ENCODE measurements at regions of chr20 and their contacts with region 1.

Region 1: GRCh38 chr20:956330-956951 is 40.3 kb upstream of the ANGPT4 start:
- DNase-seq: peak; percentile 72
- H3K4me3 Mint-ChIP-seq: no peak overlapping the region
- H3K27ac Mint-ChIP-seq: no peak overlapping the region
- H3K4me1 Mint-ChIP-seq: no peaks in the 10 kb centered on the region
- H3K27me3 Mint-ChIP-seq: peaks cover 67% of the 10 kb centered on the region
- CTCF ChIP-seq: peak; percentile 100

Region 2: GRCh38 chr20:815914-816606 is 140.4 kb before region 1 on chr20:
- CTCF ChIA-PET with region 1: interaction called, 464 read pairs
- POLR2A ChIA-PET with region 1: interaction called, 11 read pairs
- intact Hi-C with region 1: loop called (anchors 1 kb)
- DNase-seq: peak; percentile 72
- H3K4me3 Mint-ChIP-seq: no peak overlapping the region
- H3K27ac Mint-ChIP-seq: no peak overlapping the region
- H3K4me1 Mint-ChIP-seq: no peaks in the 10 kb centered on the region
- H3K27me3 Mint-ChIP-seq: peaks cover 31% of the 10 kb centered on the region
- CTCF ChIP-seq: peak; percentile 97

Region 3: GRCh38 chr20:839015-839414 is 117.4 kb before region 1 on chr20:
- CTCF ChIA-PET with region 1: interaction called, 99 read pairs
- POLR2A ChIA-PET with region 1: interaction called, 3 read pairs
- intact Hi-C with region 1: no loop called
- DNase-seq: no peak
- H3K4me3 Mint-ChIP-seq: no peak overlapping the region
- H3K27ac Mint-ChIP-seq: no peak overlapping the region
- H3K4me1 Mint-ChIP-seq: peaks cover 29% of the 10 kb centered on the region
- H3K27me3 Mint-ChIP-seq: no peaks in the 10 kb centered on the region
- CTCF ChIP-seq: no peak

Region 4: GRCh38 chr20:905396-905961 is 51.0 kb before region 1 on chr20:
- CTCF ChIA-PET with region 1: interaction called, 14 read pairs
- POLR2A ChIA-PET with region 1: no interaction called
- intact Hi-C with region 1: no loop called
- DNase-seq: no peak
- H3K4me3 Mint-ChIP-seq: no peak overlapping the region
- H3K27ac Mint-ChIP-seq: no peak overlapping the region
- H3K4me1 Mint-ChIP-seq: no peaks in the 10 kb centered on the region
- H3K27me3 Mint-ChIP-seq: no peaks in the 10 kb centered on the region
- CTCF ChIP-seq: no peak

Region 5: DNA sequence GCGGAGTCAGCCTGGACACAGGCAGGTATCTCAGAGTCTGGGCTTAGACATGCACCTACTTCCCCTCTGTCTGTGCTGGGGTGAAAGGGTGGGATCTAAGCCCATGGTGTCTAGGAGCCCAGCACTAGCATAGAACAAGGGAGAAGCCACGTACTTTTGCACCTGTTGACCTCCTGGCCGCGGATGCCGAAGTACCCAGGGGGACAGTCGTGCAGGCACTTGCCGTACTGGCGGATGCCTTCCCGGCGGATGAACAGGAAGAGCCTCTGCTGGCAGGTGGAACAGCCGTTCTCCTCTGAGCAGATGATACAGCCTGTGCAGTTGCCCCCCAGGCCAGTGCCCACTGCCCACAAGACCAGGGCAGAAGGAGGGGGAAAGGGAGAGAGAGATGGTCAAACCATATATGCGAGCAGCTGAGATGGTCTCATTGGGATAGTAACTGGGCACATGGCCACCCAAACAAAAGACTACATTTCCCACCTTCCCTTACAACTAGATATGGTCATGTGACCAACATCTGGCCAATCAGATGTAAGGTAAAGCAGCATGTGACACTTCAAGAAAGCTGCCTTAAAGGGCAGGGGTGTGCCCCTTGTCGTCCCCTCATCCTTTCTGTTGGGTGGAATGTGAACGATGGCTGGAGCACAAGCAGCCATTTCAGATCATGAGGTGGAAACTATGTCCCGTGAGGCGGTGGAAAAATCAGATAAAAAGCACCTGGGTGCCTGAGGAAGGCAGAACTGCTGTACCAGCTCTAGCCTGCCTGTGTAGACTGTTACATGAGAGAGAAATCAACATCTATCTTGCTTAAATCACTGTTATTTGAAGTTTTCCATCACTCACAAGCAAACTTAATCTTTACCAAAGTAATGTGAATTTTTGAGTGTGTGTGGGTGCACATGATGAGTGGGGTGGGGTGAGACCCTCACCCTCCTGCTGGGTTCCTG is 11.6 kb after region 1 on chr20:
- CTCF ChIA-PET with region 1: interaction called, 48 read pairs
- POLR2A ChIA-PET with region 1: no interaction called
- intact Hi-C with region 1: no loop called
- DNase-seq: peak; percentile 43
- H3K4me3 Mint-ChIP-seq: no peak overlapping the region
- H3K27ac Mint-ChIP-seq: no peak overlapping the region
- H3K4me1 Mint-ChIP-seq: no peaks in the 10 kb centered on the region
- H3K27me3 Mint-ChIP-seq: peaks cover 51% of the 10 kb centered on the region
- CTCF ChIP-seq: no peak

Region 6: GRCh38 chr20:1108437-1108920 is 152.0 kb after region 1 on chr20:
- CTCF ChIA-PET with region 1: interaction called, 52 read pairs
- POLR2A ChIA-PET with region 1: no interaction called
- intact Hi-C with region 1: no loop called
- DNase-seq: peak; percentile 62
- H3K4me3 Mint-ChIP-seq: no peak overlapping the region
- H3K27ac Mint-ChIP-seq: no peak overlapping the region
- H3K4me1 Mint-ChIP-seq: peaks cover 4% of the 10 kb centered on the region
- H3K27me3 Mint-ChIP-seq: no peaks in the 10 kb centered on the region
- CTCF ChIP-seq: peak; percentile 65

Measured in MCF 10A (cell line).